ENCODE measurements at regions of chr17 and their contacts with region 1.

Region 1: DNA sequence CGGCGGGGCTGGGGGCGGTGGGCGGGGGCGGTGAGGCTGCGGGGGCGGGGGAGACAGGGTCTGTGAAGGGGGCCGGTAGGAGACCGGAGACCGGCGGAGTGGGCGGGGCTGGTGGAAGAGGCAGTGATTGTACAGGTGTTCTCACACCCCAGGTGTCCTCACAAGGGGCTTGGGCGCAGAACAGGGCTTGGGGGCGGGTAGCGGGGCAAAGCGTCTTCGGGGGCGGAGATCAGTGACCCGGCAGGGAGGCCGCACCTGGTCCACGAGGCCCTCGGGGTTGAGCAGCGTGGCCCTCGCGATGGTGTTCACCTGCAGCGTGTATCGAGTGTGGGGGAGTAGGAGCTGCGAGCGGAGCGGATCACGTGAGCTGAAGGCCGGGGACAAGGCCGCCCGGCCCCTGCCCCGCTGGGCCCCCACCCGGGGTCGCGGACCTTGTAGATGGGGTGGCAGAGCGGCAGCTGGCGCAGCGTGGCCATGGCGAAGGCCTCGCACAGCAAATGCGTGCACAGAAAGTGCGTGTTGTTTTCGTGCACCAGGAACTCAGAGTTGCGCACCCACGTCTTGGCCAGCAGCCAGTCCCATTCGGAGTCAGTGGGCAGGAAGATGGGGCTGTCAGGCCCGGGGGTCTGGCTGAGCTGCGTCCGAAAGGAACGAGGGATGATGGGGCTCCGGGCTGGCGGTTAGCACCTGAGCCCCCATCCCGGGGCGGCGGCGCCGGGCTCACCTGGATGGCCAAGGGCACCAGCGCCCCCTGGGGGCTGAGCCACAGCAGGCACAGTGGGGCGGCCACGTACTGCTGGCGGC is 8.5 kb downstream of the ALOXE3 start:
- DNase-seq: no peak
- ATAC-seq: peak; percentile 99
- H3K4me3 ChIP-seq: no peak overlapping the region
- H3K27ac ChIP-seq: no peak overlapping the region
- H3K4me1 ChIP-seq: peaks cover 0 to 9% of the 10 kb centered on the region in 2 experiments; a peak in 2 of 4 replicates
- H3K27me3 ChIP-seq: no peaks in the 10 kb centered on the region
- CTCF ChIP-seq: peak; percentile 82 to 89 (median 88)
- POLR2A ChIP-seq: no peak
- RAD21 ChIP-seq: peak; percentile 84

Region 2: GRCh38 chr17:8041249-8041928 is 68.5 kb before region 1 on chr17:
- CTCF ChIA-PET with region 1: no interaction called
- POLR2A ChIA-PET with region 1: no interaction called
- RAD21 ChIA-PET with region 1: no interaction called
- intact Hi-C with region 1: no loop called
- DNase-seq: peak; percentile 72
- ATAC-seq: peak; percentile 78
- H3K4me3 ChIP-seq: no peak overlapping the region
- H3K27ac ChIP-seq: no peak overlapping the region
- H3K4me1 ChIP-seq: peaks cover 0 to 6% of the 10 kb centered on the region in 2 experiments; a peak in 1 of 4 replicates
- H3K27me3 ChIP-seq: no peaks in the 10 kb centered on the region
- CTCF ChIP-seq: peak; percentile 56 to 96 (median 82)
- POLR2A ChIP-seq: no peak
- RAD21 ChIP-seq: peak; percentile 97

Region 3: GRCh38 chr17:8079291-8080207 is 30.3 kb before region 1 on chr17:
- CTCF ChIA-PET with region 1: interaction called, 10 read pairs
- POLR2A ChIA-PET with region 1: no interaction called
- RAD21 ChIA-PET with region 1: interaction called in 1 of 2 experiments, 4 read pairs
- intact Hi-C with region 1: loop called (anchors 5 kb)
- DNase-seq: peak; percentile 72
- ATAC-seq: peak; percentile 88
- H3K4me3 ChIP-seq: peak overlapping the region; percentile 68 to 81
- H3K27ac ChIP-seq: peak overlapping the region; percentile 79
- H3K4me1 ChIP-seq: peaks cover 2 to 25% of the 10 kb centered on the region in 2 experiments; a peak in 3 of 4 replicates
- H3K27me3 ChIP-seq: no peaks in the 10 kb centered on the region
- CTCF ChIP-seq: peak; percentile 84 to 98 (median 86)
- POLR2A ChIP-seq: no peak
- RAD21 ChIP-seq: peak; percentile 79